CD4-positive, alpha-beta memory T cell (primary cell): ENCODE measurements at regions of chr16 and their contacts with region 1.

Region 1: GRCh38 chr16:29007730-29008593 is 23.1 kb downstream of the LAT start:
- DNase-seq: peak; percentile 64 to 84 (median 70)
- H3K4me3 ChIP-seq: peak overlapping the region in 1 of 2 donors; percentile 29
- H3K4me3 Mint-ChIP-seq: peak overlapping the region; percentile 10 to 89 (median 77)
- H3K27ac ChIP-seq: peak overlapping the region; percentile 12
- H3K27ac Mint-ChIP-seq: peak overlapping the region; percentile 83 to 99 (median 96)
- H3K4me1 ChIP-seq: peaks cover 58% of the 10 kb centered on the region
- H3K4me1 Mint-ChIP-seq: peaks cover 30 to 63% (median 46%) of the 10 kb centered on the region in 4 donors
- H3K27me3 ChIP-seq: no peaks in the 10 kb centered on the region
- H3K27me3 Mint-ChIP-seq: no peaks in the 10 kb centered on the region

Region 2: DNA sequence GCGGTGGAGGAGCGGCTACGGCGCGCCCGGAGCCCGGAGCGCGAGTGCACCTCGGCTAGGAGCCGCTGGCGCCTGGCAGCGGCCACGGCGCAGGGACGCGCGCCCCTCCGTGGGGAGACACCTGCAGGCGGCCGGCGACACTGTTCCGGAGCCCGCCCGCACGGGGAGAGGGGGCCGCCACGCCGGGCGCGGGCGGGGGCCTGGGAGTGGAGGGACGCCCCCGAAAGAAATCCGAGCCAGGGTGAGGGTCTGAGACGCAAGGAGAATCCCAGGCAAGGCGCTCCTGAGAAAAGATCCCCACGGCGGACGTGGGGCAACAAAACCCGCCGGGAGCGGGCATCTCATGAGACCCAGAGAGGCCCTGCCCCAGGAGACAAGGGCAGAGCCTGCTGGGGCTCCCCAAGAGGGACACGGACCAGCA is 944.3 kb before region 1 on chr16 and contains the start of gene GSG1L:
- CTCF ChIA-PET with region 1: no interaction called
- POLR2A ChIA-PET with region 1: no interaction called
- intact Hi-C with region 1: no loop called
- DNase-seq: no peak
- H3K4me3 ChIP-seq: no peak within 1 kb of the TSS
- H3K4me3 Mint-ChIP-seq: peak within 1 kb of the TSS in 1 of 8 donors; percentile 31
- H3K27ac ChIP-seq: no peak within 1 kb of the TSS
- H3K27ac Mint-ChIP-seq: no peak within 1 kb of the TSS
- H3K4me1 ChIP-seq: no peaks in the 10 kb centered on the region
- H3K4me1 Mint-ChIP-seq: peaks cover 3 to 11% (median 5%) of the 10 kb centered on the region in 4 donors
- H3K27me3 ChIP-seq: peaks cover 28% of the 10 kb centered on the region
- H3K27me3 Mint-ChIP-seq: peaks cover 35 to 36% of the 10 kb centered on the region in 2 donors
- total RNA-seq, gene GSG1L: not detected

Region 3: DNA sequence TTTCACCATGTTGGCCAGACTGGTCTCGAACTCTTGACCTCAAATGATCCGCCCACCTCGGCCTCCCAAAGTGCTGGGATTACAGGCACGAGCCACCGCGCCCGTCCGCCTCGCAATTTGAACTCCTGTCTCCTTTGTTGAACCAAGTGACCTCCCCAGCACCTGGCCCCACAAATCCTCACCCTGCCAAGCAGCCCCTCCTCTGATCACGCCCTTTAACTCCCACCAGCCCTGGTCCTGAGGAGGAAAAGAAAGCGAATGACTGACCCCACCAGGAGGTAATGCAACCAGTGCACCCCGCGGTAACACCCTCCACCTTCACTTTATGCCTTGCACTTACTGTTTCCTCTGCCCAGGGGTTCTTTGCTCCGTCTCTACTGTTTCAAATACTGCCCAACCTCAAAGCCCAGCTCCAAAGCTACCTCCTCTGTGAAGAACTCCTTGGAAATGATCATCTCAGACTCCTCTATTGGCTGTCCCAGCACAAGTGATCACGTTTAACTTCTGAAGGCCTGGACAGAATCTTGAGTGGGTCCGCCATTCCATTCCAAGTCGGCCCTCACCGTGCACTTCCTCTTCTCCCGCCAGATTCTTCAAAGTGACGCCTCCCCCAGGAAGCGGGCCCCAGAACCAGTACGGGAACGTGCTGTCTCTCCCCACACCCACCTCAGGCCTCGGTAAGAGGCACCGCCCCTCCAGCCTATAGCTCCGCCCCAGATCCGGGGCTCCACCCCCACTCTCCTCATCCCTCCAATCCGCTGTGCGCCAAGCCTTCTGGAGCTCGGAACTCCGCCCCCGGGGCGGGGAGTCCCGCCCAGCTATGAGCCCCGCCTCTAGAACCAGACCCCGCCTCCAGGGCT is 71.8 kb before region 1 on chr16:
- CTCF ChIA-PET with region 1: no interaction called
- POLR2A ChIA-PET with region 1: no interaction called
- intact Hi-C with region 1: no loop called
- DNase-seq: peak; percentile 83 to 85 (median 84)
- H3K4me3 ChIP-seq: peak overlapping the region; percentile 30 to 34
- H3K4me3 Mint-ChIP-seq: peak overlapping the region; percentile 55 to 80 (median 74)
- H3K27ac ChIP-seq: no peak overlapping the region
- H3K27ac Mint-ChIP-seq: peak overlapping the region; percentile 3 to 88 (median 46)
- H3K4me1 ChIP-seq: peaks cover 14% of the 10 kb centered on the region
- H3K4me1 Mint-ChIP-seq: peaks cover 11 to 19% (median 12%) of the 10 kb centered on the region in 4 donors
- H3K27me3 ChIP-seq: no peaks in the 10 kb centered on the region
- H3K27me3 Mint-ChIP-seq: no peaks in the 10 kb centered on the region

Region 4: GRCh38 chr16:28990375-28991040 is 17.5 kb before region 1 on chr16:
- CTCF ChIA-PET with region 1: interaction called, 18 read pairs
- POLR2A ChIA-PET with region 1: interaction called, 92 read pairs
- intact Hi-C with region 1: loop called (anchors 2 kb)
- DNase-seq: peak in 1 of 5 donors; percentile 73
- H3K4me3 ChIP-seq: no peak overlapping the region
- H3K4me3 Mint-ChIP-seq: peak overlapping the region; percentile 62 to 99 (median 80)
- H3K27ac ChIP-seq: peak overlapping the region; percentile 33
- H3K27ac Mint-ChIP-seq: peak overlapping the region; percentile 80 to 98 (median 93)
- H3K4me1 ChIP-seq: peaks cover 47% of the 10 kb centered on the region
- H3K4me1 Mint-ChIP-seq: peaks cover 33 to 58% (median 45%) of the 10 kb centered on the region in 4 donors
- H3K27me3 ChIP-seq: no peaks in the 10 kb centered on the region
- H3K27me3 Mint-ChIP-seq: no peaks in the 10 kb centered on the region

Region 5: DNA sequence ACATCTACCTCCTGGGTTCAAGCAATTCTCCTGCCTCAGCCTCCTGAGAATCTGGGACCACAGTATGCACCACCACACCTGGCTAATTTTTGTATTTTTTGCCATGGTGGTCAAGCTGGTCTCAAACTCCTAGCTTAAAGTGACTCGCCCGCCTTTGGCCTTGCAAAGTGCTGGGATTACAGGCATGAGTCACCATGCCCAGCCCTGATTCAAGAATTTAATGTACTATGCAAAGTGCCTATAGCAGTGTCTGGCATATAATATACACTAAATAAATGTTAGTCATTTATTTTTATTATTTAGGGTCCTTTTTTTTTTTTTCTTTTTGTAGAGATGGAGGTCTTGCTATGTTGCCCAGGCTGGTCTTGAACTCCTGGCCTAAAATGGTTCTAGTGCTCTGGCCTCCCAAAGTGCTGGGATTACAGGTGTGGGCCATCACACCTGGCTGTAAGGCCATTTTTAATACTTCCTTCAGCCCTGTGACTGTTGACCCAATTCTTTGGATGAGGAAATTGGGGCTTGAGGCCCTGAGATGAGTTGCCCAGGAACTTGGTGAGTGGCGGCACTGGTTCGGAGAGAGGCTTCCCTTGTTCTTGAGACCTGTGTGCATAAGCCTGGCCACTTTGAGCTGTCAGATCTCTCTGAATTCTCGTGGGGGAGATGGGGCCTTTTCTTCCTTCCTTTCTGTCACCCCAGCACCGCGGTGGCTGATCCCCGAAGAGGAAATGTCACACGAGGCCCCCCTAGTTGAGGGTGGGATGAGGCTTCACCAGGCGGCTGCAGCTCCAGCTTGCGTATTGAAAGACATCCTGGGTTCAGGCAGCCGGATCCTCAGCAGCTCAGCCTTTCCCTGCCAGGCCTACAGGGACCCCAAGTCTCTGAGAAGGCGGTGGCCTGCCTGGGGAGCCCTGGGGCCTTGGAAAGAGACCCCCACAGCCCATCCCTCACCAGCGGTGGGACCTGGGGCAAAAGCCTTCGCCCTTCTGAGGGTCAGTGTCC is 15.6 kb after region 1 on chr16:
- CTCF ChIA-PET with region 1: interaction called, 6 read pairs
- POLR2A ChIA-PET with region 1: interaction called, 13 read pairs
- intact Hi-C with region 1: no loop called
- DNase-seq: no peak
- H3K4me3 ChIP-seq: peak overlapping the region in 1 of 2 donors; percentile 17
- H3K4me3 Mint-ChIP-seq: peak overlapping the region in 4 of 8 donors; percentile 15 to 57 (median 48)
- H3K27ac ChIP-seq: no peak overlapping the region
- H3K27ac Mint-ChIP-seq: peak overlapping the region; percentile 30 to 88 (median 55)
- H3K4me1 ChIP-seq: peaks cover 47% of the 10 kb centered on the region
- H3K4me1 Mint-ChIP-seq: peaks cover 21 to 50% (median 36%) of the 10 kb centered on the region in 4 donors
- H3K27me3 ChIP-seq: no peaks in the 10 kb centered on the region
- H3K27me3 Mint-ChIP-seq: no peaks in the 10 kb centered on the region